Activated T-helper 1 cell treated with anti-CD3 and anti-CD28 coated beads, Interleukin-12 subunit alpha, Interleukin-12 subunit beta, Interleukin-2, Interleukin-4 antibody, amounts not matched to agents 30 ng/mL and 10 ng/mL and 1 ng/mL, durations not matched to agents 14 hours and 24 hours and 36 hours (primary cell): ENCODE measurements at regions of chr9 and their contacts with region 1.

Region 1: GRCh38 chr9:126939821-126940221 is 25.2 kb downstream of the RALGPS1 start:
- DNase-seq: no peak
- H3K4me3 Mint-ChIP-seq: no peak overlapping the region
- H3K27ac Mint-ChIP-seq: no peak overlapping the region
- H3K4me1 Mint-ChIP-seq: peaks cover 6% of the 10 kb centered on the region
- H3K27me3 Mint-ChIP-seq: peaks cover 26% of the 10 kb centered on the region

Region 2: DNA sequence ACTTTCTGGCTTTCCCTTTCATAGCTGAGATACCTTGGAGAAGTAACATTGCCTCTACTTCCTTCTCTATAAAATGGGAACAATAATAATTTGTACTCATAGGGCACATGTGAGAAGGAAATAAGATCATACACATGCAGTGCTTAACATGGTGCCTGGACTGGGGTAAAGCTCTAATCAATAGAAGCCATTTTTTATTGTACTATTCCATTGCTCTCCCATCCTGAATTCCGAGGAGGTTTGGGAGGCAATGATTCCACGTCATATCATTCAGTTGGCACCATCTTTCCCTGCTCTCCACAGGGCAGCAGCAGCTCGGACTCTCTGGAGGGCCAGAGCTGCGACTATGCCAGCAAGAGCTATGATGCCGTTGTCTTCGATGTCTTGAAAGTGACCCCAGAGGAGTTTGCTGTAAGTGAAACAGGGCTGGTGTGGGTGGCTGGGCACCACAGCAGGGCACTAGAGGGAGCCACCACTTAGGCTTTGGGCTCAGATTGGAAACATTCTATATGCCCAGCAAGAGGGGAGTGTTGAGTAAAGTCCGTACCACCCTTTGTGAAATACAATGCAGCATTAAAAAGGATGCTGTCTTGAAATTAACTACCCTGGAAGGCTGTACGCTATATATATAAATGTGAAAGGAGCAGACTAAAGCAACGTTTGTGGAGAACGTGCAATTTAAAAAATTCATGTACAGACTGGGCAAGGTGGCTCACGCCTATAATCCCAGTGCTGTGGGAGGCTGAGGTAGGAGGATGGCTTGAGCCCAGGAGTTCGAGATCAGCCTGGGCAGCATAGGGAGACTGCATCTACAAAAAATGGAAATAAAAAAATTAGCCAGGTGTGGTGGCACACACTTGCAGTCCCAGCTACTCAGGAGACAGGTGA is 26.0 kb after region 1 on chr9:
- intact Hi-C with region 1: loop called (anchors 1 kb)
- DNase-seq: peak; percentile 21
- H3K4me3 Mint-ChIP-seq: no peak overlapping the region
- H3K27ac Mint-ChIP-seq: no peak overlapping the region
- H3K4me1 Mint-ChIP-seq: peaks cover 17% of the 10 kb centered on the region
- H3K27me3 Mint-ChIP-seq: peaks cover 30% of the 10 kb centered on the region

Region 3: GRCh38 chr9:127199001-127199791 is 259.4 kb after region 1 on chr9:
- intact Hi-C with region 1: loop called (anchors 1 kb)
- DNase-seq: peak; percentile 65
- H3K4me3 Mint-ChIP-seq: no peak overlapping the region
- H3K27ac Mint-ChIP-seq: no peak overlapping the region
- H3K4me1 Mint-ChIP-seq: peaks cover 8% of the 10 kb centered on the region
- H3K27me3 Mint-ChIP-seq: peaks cover 7% of the 10 kb centered on the region

Region 4: GRCh38 chr9:127537792-127538191 is 598.0 kb after region 1 on chr9:
- intact Hi-C with region 1: no loop called
- DNase-seq: no peak
- H3K4me3 Mint-ChIP-seq: no peak overlapping the region
- H3K27ac Mint-ChIP-seq: no peak overlapping the region
- H3K4me1 Mint-ChIP-seq: no peaks in the 10 kb centered on the region
- H3K27me3 Mint-ChIP-seq: no peaks in the 10 kb centered on the region